ENCODE measurements at regions of chr12 and their contacts with region 1.

Region 1: DNA sequence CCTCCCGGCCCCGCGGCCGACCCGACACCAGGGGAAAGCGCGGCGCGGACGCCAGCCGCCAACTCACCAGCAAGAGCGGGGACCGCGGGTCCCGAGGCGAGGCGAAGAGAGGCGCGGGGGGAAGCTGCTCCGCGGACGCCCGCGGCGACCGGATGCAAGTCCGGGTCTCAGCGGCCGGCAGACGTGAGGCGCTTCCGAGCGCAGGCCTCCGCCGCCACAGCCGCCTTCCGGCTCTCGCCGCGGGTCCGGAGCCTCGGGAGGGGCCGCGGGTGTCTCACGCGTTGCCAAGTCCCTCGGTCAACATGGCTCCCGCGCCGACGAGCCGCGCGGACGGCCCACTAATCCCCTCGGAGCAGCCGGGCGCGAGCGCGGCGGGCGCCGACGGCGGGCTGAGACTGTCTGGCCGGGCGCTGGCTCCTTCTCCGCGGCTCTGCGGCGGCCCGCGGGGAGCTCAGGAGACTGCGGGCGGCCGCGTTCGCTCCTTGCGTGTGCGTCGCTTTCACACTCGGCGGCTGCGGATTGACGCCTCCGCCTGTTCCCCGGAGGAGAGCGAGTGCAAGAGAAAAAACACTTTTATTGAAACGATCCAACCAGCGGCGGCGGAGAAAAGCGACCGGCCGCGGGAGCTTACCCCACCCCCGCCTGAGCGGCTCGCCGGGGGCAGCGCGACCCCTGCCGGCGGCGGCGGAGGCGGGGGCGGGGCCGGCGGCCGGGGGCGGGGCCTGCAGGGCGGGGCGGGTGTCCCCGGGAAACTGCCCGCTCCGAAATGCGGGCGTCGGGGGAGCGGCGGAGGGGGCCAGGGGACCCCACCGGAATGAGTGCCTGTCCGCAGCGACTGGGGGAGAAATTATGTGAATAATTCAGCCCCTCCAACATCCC is at the start of gene CDK17:
- DNase-seq: peak; percentile 78 to 95 (median 89)
- ATAC-seq: peak; percentile 69 to 84 (median 73)
- H3K4me3 ChIP-seq: peak within 1 kb of the TSS; percentile 74 to 96
- H3K4me3 Mint-ChIP-seq: peak within 1 kb of the TSS; percentile 89 to 98 (median 95)
- H3K27ac ChIP-seq: peak within 1 kb of the TSS; percentile 94
- H3K27ac Mint-ChIP-seq: peak within 1 kb of the TSS; percentile 96 to 97
- H3K4me1 ChIP-seq: peaks cover 16 to 32% of the 10 kb centered on the region in 2 experiments
- H3K4me1 Mint-ChIP-seq: peaks cover 44 to 49% (median 49%) of the 10 kb centered on the region in 3 donors
- H3K27me3 ChIP-seq: no peaks in the 10 kb centered on the region
- H3K27me3 Mint-ChIP-seq: no peaks in the 10 kb centered on the region
- total RNA-seq, gene CDK17: 56.4 to 114 (median 72.2) TPM

Region 2: GRCh38 chr12:96241846-96242256 is 158.3 kb before region 1 on chr12:
- CTCF ChIA-PET with region 1: interaction called in 1 of 2 experiments, 5 read pairs
- POLR2A ChIA-PET with region 1: interaction called in 1 of 2 experiments, 22 read pairs
- DNase-seq: peak in 34 of 35 experiments; percentile 35 to 95 (median 77)
- ATAC-seq: peak; percentile 73 to 97 (median 86)
- H3K4me3 ChIP-seq: peak overlapping the region; percentile 44 to 45
- H3K4me3 Mint-ChIP-seq: peak overlapping the region; percentile 53 to 69 (median 54)
- H3K27ac ChIP-seq: peak overlapping the region; percentile 99
- H3K27ac Mint-ChIP-seq: peak overlapping the region; percentile 81 to 91
- H3K4me1 ChIP-seq: peaks cover 32 to 62% of the 10 kb centered on the region in 2 experiments
- H3K4me1 Mint-ChIP-seq: peaks cover 60 to 76% (median 74%) of the 10 kb centered on the region in 3 donors
- H3K27me3 ChIP-seq: no peaks in the 10 kb centered on the region
- H3K27me3 Mint-ChIP-seq: no peaks in the 10 kb centered on the region

Region 3: GRCh38 chr12:96294831-96295230 is 105.3 kb before region 1 on chr12:
- CTCF ChIA-PET with region 1: interaction called, 4 to 12 read pairs
- POLR2A ChIA-PET with region 1: interaction called, 3 to 5 read pairs
- DNase-seq: peak in 1 of 35 experiments; percentile 50
- ATAC-seq: no peak
- H3K4me3 ChIP-seq: no peak overlapping the region
- H3K4me3 Mint-ChIP-seq: no peak overlapping the region
- H3K27ac ChIP-seq: peak overlapping the region; percentile 19
- H3K27ac Mint-ChIP-seq: peak overlapping the region; percentile 22 to 80
- H3K4me1 ChIP-seq: peaks cover 0 to 5% of the 10 kb centered on the region in 2 experiments
- H3K4me1 Mint-ChIP-seq: peaks cover 9 to 28% (median 28%) of the 10 kb centered on the region in 3 donors
- H3K27me3 ChIP-seq: no peaks in the 10 kb centered on the region
- H3K27me3 Mint-ChIP-seq: no peaks in the 10 kb centered on the region

Region 4: DNA sequence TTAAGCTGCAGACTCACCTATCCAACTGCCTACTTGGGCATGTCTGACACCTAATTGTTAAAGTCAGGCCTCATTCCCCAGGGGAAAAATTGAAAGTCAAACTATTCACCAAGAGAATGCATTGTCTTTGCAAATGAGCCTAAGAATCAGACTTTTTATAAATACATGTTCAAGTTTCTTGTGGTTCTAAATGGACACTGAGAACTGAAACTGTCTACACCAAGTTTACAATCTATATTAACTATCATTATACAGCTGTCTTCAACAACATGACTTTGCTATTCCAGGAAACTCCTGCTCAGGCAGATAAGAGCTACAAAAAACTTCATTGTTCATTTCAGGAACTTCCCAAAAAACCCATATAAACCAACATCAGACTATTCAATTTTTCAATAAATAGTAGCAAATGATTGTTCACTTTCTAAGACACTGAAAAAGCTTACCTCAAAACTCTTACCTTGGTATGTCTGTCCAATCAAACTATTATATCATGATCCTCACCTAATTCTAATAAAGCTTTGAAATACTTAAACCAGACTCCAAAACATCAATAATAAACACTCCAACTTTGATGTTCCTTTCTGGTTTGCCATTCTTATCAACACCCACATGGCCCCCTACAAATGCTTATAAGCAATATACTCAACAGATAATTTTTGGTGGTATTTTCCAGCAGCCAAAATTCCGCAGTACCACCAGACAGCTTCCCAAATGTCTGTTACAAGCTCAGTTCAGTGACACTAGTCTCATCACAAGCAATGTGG is 24.1 kb before region 1 on chr12:
- CTCF ChIA-PET with region 1: interaction called, 4 to 37 read pairs
- POLR2A ChIA-PET with region 1: interaction called, 8 to 37 read pairs
- DNase-seq: no peak
- ATAC-seq: no peak
- H3K4me3 ChIP-seq: no peak overlapping the region
- H3K4me3 Mint-ChIP-seq: peak overlapping the region in 2 of 3 donors; percentile 1 to 88
- H3K27ac ChIP-seq: peak overlapping the region; percentile 82
- H3K27ac Mint-ChIP-seq: peak overlapping the region; percentile 97 to 98
- H3K4me1 ChIP-seq: peaks cover 40 to 43% of the 10 kb centered on the region in 2 experiments
- H3K4me1 Mint-ChIP-seq: peaks cover 84 to 86% (median 85%) of the 10 kb centered on the region in 3 donors
- H3K27me3 ChIP-seq: no peaks in the 10 kb centered on the region
- H3K27me3 Mint-ChIP-seq: no peaks in the 10 kb centered on the region

Region 5: GRCh38 chr12:96383991-96384390 is 16.2 kb before region 1 on chr12:
- CTCF ChIA-PET with region 1: interaction called, 4 to 37 read pairs
- POLR2A ChIA-PET with region 1: interaction called, 3 to 37 read pairs
- DNase-seq: no peak
- ATAC-seq: no peak
- H3K4me3 ChIP-seq: no peak overlapping the region
- H3K4me3 Mint-ChIP-seq: peak overlapping the region in 2 of 3 donors; percentile 3 to 4
- H3K27ac ChIP-seq: no peak overlapping the region
- H3K27ac Mint-ChIP-seq: peak overlapping the region; percentile 16 to 76
- H3K4me1 ChIP-seq: peaks cover 2 to 34% of the 10 kb centered on the region in 2 experiments
- H3K4me1 Mint-ChIP-seq: peaks cover 81 to 86% (median 83%) of the 10 kb centered on the region in 3 donors
- H3K27me3 ChIP-seq: no peaks in the 10 kb centered on the region
- H3K27me3 Mint-ChIP-seq: no peaks in the 10 kb centered on the region

Region 6: DNA sequence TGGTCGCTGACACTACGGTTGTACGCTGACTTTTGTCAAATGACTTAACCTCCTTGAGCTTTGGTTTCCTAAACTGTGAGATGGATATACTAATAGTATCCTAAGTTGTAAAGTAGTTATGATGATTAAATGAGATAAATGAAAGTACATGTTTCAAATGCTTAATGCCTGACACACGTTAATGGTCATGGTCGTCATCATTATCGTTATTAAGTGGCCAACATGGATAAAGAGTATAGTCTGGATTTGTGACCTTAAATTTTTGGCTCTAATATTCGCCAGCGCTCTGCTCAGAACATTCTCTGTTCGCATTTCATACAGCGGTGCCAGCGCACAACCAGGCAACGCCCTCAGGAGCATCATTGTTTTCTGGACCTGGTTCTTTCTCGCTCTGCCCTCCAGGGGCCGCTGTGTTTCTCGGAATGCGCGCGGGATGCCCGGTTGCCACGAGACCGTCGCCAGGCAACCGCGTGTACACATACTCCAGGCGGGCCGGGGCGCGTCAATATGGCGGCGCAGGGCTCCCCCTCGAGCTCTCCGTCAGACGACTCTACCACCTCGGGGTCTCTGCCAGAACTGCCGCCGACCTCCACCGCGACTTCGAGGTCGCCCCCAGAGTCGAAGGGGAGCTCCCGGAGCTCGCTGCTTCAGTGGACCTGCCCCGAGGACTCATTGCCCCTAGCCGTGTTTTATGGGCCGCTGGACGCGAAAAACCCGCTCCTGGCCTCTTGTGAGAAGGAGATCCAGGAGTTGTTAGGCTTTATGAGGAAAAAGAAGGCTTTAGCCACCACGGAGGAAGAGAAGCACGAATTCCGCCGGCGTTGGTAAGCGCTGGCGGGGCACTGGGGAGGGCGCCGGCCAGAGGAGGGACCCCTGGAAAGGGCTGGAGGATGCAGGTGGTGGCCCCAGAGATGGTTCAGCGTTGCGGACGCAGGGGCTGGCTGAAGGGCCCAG is 89.2 kb after region 1 on chr12 and contains the start of gene CFAP54:
- CTCF ChIA-PET with region 1: interaction called, 5 to 26 read pairs
- POLR2A ChIA-PET with region 1: interaction called, 3 to 20 read pairs
- DNase-seq: peak; percentile 91 to 98 (median 95)
- ATAC-seq: peak; percentile 89 to 92 (median 92)
- H3K4me3 ChIP-seq: peak within 1 kb of the TSS; percentile 80 to 85
- H3K4me3 Mint-ChIP-seq: peak within 1 kb of the TSS; percentile 85 to 90 (median 85)
- H3K27ac ChIP-seq: peak within 1 kb of the TSS; percentile 43
- H3K27ac Mint-ChIP-seq: peak within 1 kb of the TSS; percentile 63 to 74
- H3K4me1 ChIP-seq: peaks cover 3 to 27% of the 10 kb centered on the region in 2 experiments
- H3K4me1 Mint-ChIP-seq: peaks cover 28 to 42% (median 31%) of the 10 kb centered on the region in 3 donors
- H3K27me3 ChIP-seq: peaks cover 0 to 6% of the 10 kb centered on the region in 2 experiments
- H3K27me3 Mint-ChIP-seq: no peaks in the 10 kb centered on the region
- total RNA-seq, gene CFAP54: 0.47 to 0.95 (median 0.90) TPM

Region 7: GRCh38 chr12:96516472-96517430 is 116.6 kb after region 1 on chr12:
- CTCF ChIA-PET with region 1: interaction called, 9 to 42 read pairs
- POLR2A ChIA-PET with region 1: interaction called, 8 read pairs
- DNase-seq: peak; percentile 65 to 93 (median 83)
- ATAC-seq: peak; percentile 77 to 92 (median 83)
- H3K4me3 ChIP-seq: no peak overlapping the region
- H3K4me3 Mint-ChIP-seq: peak overlapping the region in 2 of 3 donors; percentile 35 to 37
- H3K27ac ChIP-seq: peak overlapping the region; percentile 28
- H3K27ac Mint-ChIP-seq: peak overlapping the region; percentile 68 to 81
- H3K4me1 ChIP-seq: peaks cover 0 to 7% of the 10 kb centered on the region in 2 experiments
- H3K4me1 Mint-ChIP-seq: peaks cover 6 to 12% (median 10%) of the 10 kb centered on the region in 3 donors
- H3K27me3 ChIP-seq: no peaks in the 10 kb centered on the region
- H3K27me3 Mint-ChIP-seq: no peaks in the 10 kb centered on the region

Measured in T-cell (primary cell).